ENCODE measurements at regions of chr12 and their contacts with region 1.

Region 1: DNA sequence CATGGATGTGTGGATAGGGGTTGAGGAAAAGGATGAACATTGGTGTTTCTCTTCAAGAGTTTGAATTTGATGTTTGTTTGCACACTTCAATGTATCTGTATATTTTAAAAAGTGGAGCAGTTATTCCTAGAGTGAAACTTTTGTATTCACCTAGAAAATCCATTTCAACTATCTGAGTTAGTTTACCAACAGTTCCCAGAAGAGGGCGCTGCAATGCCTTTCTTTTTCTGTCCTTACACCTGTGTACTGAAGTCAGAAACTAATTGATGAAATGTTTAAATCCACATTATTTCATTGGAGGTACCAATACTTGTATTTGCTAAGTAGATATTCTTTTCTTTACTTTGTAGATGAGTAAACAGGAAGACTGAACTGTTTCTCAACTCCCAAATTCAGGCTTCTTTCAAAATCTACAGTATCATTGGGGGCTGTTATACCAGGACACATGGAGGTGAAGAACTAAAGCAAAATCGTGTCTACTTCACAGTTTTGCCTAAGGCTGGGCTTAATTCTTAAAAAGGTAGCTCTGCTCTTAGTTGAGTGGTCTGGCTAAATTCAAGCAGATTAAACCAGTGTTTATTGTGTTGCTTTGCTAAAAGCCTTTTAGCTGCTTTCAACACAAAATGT is 26.6 kb upstream of the KLRB1 start:
- DNase-seq: peak; percentile 55 to 91 (median 78)
- ATAC-seq: peak; percentile 89
- H3K4me3 ChIP-seq: no peak overlapping the region
- H3K4me3 Mint-ChIP-seq: peak overlapping the region; percentile 79
- H3K27ac ChIP-seq: peak overlapping the region in 1 of 2 donors; percentile 37
- H3K27ac Mint-ChIP-seq: peak overlapping the region; percentile 77
- H3K4me1 ChIP-seq: peaks cover 45% of the 10 kb centered on the region
- H3K4me1 Mint-ChIP-seq: peaks cover 59% of the 10 kb centered on the region
- H3K27me3 ChIP-seq: no peaks in the 10 kb centered on the region
- H3K27me3 Mint-ChIP-seq: no peaks in the 10 kb centered on the region
- CTCF ChIP-seq: peak; percentile 87

Region 2: GRCh38 chr12:9331218-9331626 is 303.1 kb before region 1 on chr12:
- CTCF ChIA-PET with region 1: no interaction called
- POLR2A ChIA-PET with region 1: no interaction called
- intact Hi-C with region 1: loop called (anchors 5 kb)
- DNase-seq: peak; percentile 37 to 81 (median 64)
- ATAC-seq: peak; percentile 84
- H3K4me3 ChIP-seq: no peak overlapping the region
- H3K4me3 Mint-ChIP-seq: no peak overlapping the region
- H3K27ac ChIP-seq: no peak overlapping the region
- H3K27ac Mint-ChIP-seq: no peak overlapping the region
- H3K4me1 ChIP-seq: peaks cover 5% of the 10 kb centered on the region
- H3K4me1 Mint-ChIP-seq: peaks cover 24% of the 10 kb centered on the region
- H3K27me3 ChIP-seq: no peaks in the 10 kb centered on the region
- H3K27me3 Mint-ChIP-seq: no peaks in the 10 kb centered on the region
- CTCF ChIP-seq: peak; percentile 99

Region 3: GRCh38 chr12:9687228-9687627 is 52.9 kb after region 1 on chr12:
- CTCF ChIA-PET with region 1: interaction called, 3 read pairs
- POLR2A ChIA-PET with region 1: no interaction called
- intact Hi-C with region 1: loop called in 1 of 2 experiments (anchors 5 kb)
- DNase-seq: peak in 3 of 14 experiments; percentile 20 to 52 (median 45)
- ATAC-seq: peak; percentile 39
- H3K4me3 ChIP-seq: no peak overlapping the region
- H3K4me3 Mint-ChIP-seq: peak overlapping the region; percentile 7
- H3K27ac ChIP-seq: peak overlapping the region in 1 of 2 donors; percentile 35
- H3K27ac Mint-ChIP-seq: peak overlapping the region; percentile 81
- H3K4me1 ChIP-seq: peaks cover 41% of the 10 kb centered on the region
- H3K4me1 Mint-ChIP-seq: peaks cover 73% of the 10 kb centered on the region
- H3K27me3 ChIP-seq: no peaks in the 10 kb centered on the region
- H3K27me3 Mint-ChIP-seq: no peaks in the 10 kb centered on the region
- CTCF ChIP-seq: no peak

Region 4: DNA sequence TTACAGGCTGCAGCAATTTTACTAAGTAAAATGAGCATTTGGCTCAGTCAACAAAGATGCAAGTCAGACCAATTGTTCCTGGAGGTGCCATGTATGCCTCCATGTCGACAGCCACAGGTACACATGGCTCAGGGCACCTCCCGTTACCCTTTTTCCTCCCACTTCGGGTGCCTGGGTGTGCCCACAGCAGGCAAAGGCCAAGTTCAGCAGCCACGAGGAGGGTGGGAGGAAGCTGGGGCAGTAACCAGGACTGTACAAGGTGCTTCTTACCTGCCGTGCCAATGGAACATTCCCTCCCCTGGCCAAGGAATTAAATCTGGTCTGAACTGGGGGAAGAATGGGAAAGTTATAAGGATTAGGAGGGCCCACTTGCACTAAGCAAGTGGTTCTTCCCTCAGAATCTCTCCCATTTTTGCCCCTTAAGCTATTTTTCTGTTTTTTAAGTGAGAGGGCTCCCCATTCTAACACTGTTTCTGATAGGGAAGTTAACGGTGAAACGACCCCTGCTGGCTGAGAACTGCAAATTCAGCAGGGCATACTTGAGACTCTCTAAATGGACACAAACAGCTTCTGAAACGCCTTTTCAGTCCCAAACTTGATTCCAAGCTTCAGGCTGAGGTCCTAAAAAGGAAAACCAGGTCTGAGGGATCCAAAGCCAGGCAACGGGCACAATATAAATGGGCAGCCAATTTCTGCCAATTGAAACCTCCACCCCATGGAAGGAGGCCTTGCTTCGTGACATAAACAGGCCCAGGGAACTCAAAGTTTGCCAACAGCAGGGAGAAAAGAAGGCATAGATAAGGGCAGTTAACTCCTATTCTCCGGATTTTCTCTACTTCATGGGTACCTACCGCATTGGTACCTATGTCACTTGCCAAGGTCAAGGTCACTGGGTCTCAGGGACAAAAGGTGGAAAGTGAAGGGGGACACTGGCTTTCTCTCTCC is 73.8 kb after region 1 on chr12:
- CTCF ChIA-PET with region 1: interaction called, 30 read pairs
- POLR2A ChIA-PET with region 1: interaction called, 35 read pairs
- intact Hi-C with region 1: loop called (anchors 1 kb)
- DNase-seq: peak; percentile 45 to 87 (median 60)
- ATAC-seq: peak; percentile 85
- H3K4me3 ChIP-seq: peak overlapping the region; percentile 30
- H3K4me3 Mint-ChIP-seq: peak overlapping the region; percentile 79
- H3K27ac ChIP-seq: peak overlapping the region; percentile 68 to 71
- H3K27ac Mint-ChIP-seq: peak overlapping the region; percentile 89
- H3K4me1 ChIP-seq: peaks cover 23% of the 10 kb centered on the region
- H3K4me1 Mint-ChIP-seq: peaks cover 79% of the 10 kb centered on the region
- H3K27me3 ChIP-seq: no peaks in the 10 kb centered on the region
- H3K27me3 Mint-ChIP-seq: no peaks in the 10 kb centered on the region
- CTCF ChIP-seq: peak; percentile 74

Region 5: DNA sequence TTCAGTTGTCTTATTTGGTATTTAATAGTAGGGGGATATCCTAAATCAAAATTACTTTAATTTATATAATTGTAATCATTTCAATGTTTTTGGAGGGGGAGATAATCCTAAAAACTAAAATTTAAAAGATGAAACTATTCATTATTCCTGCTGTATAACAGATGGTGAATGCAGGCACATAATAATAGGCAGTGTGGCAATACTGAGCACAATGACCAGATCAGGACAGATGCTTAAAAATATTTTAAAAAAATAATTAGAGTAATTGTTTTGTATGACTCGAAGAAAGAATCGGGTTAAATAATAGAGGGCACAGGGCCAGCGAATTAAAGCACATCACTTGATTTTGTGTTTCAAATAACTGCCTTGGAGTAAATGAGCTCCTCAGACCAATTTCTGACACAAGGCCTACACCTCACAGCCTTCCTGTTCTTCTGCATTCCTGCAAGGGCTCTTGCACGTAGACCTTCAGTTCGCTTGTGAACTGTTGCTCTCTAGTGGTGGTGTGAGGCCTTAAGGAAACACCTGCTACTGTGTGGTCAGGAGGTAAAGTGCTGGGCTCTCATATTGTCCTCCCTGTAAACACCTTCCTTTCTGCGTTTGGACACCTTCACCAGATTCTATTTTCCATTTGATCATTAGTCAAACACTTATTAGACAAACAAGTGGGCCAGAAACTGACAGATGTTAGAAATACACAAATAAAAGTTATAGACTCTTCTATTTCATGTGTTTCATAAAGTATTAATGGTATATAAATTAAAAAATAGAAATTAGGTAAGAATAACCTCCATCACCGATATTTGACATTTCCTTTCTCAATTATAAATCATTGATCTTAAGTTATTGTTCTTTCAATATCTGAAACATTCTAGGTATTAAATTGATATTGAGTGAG is 163.7 kb after region 1 on chr12:
- CTCF ChIA-PET with region 1: no interaction called
- POLR2A ChIA-PET with region 1: no interaction called
- intact Hi-C with region 1: loop called (anchors 1 to 2 kb)
- DNase-seq: peak; percentile 40 to 91 (median 56)
- ATAC-seq: peak; percentile 95
- H3K4me3 ChIP-seq: no peak overlapping the region
- H3K4me3 Mint-ChIP-seq: peak overlapping the region; percentile 52
- H3K27ac ChIP-seq: peak overlapping the region in 1 of 2 donors; percentile 42
- H3K27ac Mint-ChIP-seq: peak overlapping the region; percentile 5
- H3K4me1 ChIP-seq: peaks cover 19% of the 10 kb centered on the region
- H3K4me1 Mint-ChIP-seq: peaks cover 51% of the 10 kb centered on the region
- H3K27me3 ChIP-seq: no peaks in the 10 kb centered on the region
- H3K27me3 Mint-ChIP-seq: no peaks in the 10 kb centered on the region
- CTCF ChIP-seq: peak; percentile 91

Region 6: DNA sequence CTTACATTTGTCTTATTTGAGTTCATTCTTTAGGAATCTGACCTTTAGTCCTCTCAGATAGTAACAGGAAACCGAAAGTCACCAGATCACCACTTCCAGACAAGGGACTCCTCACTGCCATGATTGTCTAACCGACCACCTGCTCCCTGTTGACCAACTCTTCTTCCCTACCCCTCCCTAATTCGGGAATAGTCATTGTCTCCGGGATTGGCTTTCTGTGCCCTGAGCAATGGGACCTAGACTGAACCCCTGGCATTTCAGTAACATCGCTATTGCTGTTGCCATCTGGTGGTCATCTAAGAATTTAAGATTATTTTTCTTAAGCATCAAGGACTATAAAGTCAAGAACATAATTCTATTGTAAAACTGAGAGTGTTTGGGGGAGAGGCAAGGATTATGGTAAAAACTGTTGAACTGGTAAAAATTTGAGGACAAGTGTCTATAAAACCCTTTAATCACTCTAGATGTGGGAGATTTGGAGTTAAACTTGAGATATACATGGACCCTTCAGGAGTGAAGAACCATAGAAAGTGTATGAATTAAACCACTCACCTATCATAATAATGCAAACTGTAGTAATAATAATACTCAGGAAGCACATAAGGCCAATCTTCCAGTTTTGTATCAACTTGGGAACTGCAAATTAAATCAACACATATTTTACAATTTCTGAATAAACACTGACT is 291.6 kb after region 1 on chr12:
- CTCF ChIA-PET with region 1: no interaction called
- POLR2A ChIA-PET with region 1: no interaction called
- intact Hi-C with region 1: loop called in 1 of 2 experiments (anchors 5 kb)
- DNase-seq: peak in 5 of 14 experiments; percentile 9 to 70 (median 57)
- ATAC-seq: peak; percentile 48
- H3K4me3 ChIP-seq: peak overlapping the region; percentile 21
- H3K4me3 Mint-ChIP-seq: peak overlapping the region; percentile 51
- H3K27ac ChIP-seq: no peak overlapping the region
- H3K27ac Mint-ChIP-seq: no peak overlapping the region
- H3K4me1 ChIP-seq: no peaks in the 10 kb centered on the region
- H3K4me1 Mint-ChIP-seq: peaks cover 9% of the 10 kb centered on the region
- H3K27me3 ChIP-seq: no peaks in the 10 kb centered on the region
- H3K27me3 Mint-ChIP-seq: no peaks in the 10 kb centered on the region
- CTCF ChIP-seq: peak; percentile 75

Region 7: GRCh38 chr12:9977916-9978315 is 343.6 kb after region 1 on chr12:
- CTCF ChIA-PET with region 1: no interaction called
- POLR2A ChIA-PET with region 1: no interaction called
- intact Hi-C with region 1: no loop called
- DNase-seq: no peak
- ATAC-seq: no peak
- H3K4me3 ChIP-seq: no peak overlapping the region
- H3K4me3 Mint-ChIP-seq: no peak overlapping the region
- H3K27ac ChIP-seq: no peak overlapping the region
- H3K27ac Mint-ChIP-seq: no peak overlapping the region
- H3K4me1 ChIP-seq: no peaks in the 10 kb centered on the region
- H3K4me1 Mint-ChIP-seq: no peaks in the 10 kb centered on the region
- H3K27me3 ChIP-seq: no peaks in the 10 kb centered on the region
- H3K27me3 Mint-ChIP-seq: peaks cover 7% of the 10 kb centered on the region
- CTCF ChIP-seq: no peak

Measured in CD4-positive, alpha-beta T cell (primary cell).